Activated CD8-positive, alpha-beta T cell treated with anti-CD3 and anti-CD28 coated beads, Interleukin-2, amount 10 ng/mL, durations not matched to agents 7 days and 5 days (primary cell): ENCODE measurements at regions of chr14 and their contacts with region 1.

Region 1: DNA sequence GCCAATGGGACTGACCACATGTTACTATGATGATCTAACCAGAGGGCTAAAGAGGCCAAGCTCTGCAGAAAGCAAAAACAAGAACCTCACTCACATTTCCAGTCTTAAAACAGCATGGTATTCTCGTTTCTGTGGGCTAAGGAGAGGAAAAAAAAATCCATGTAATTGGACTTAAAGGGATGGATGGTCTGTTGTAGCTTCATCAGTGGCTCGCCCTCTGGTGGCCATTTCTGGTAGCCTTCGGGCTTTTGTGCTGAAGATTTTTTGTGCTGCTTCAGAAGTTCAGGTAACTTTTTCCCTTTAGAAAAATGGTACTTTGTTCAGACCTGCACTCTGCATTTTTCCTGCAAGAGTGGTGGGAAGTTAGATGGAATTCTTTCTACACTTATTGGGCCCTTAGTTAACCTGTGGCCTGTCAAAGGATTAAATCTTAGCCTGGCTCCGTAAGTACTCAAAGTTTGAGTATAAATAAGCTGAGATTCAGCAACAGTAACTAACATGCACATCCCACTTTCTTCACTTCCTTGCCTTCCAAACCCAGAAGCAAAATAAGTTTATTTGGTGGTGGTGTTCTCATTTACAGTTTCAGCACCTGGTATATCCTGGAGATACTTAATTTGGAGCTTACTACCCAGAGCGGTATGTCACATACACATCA is 22.3 kb downstream of the DCAF4 start:
- DNase-seq: peak; percentile 78
- ATAC-seq: peak; percentile 42
- H3K4me3 Mint-ChIP-seq: no peak overlapping the region
- H3K27ac Mint-ChIP-seq: peak overlapping the region; percentile 13
- H3K4me1 Mint-ChIP-seq: peaks cover 21% of the 10 kb centered on the region
- H3K27me3 Mint-ChIP-seq: no peaks in the 10 kb centered on the region

Region 2: GRCh38 chr14:72891666-72892102 is 56.9 kb before region 1 on chr14:
- CTCF ChIA-PET with region 1: no interaction called
- POLR2A ChIA-PET with region 1: no interaction called
- DNase-seq: no peak
- ATAC-seq: no peak
- H3K4me3 Mint-ChIP-seq: peak overlapping the region; percentile 90
- H3K27ac Mint-ChIP-seq: no peak overlapping the region
- H3K4me1 Mint-ChIP-seq: peaks cover 49% of the 10 kb centered on the region
- H3K27me3 Mint-ChIP-seq: peaks cover 58% of the 10 kb centered on the region

Region 3: GRCh38 chr14:72926292-72927028 is 22.1 kb before region 1 on chr14 and contains the start of gene DCAF4:
- CTCF ChIA-PET with region 1: interaction called, 10 read pairs
- POLR2A ChIA-PET with region 1: interaction called, 3 read pairs
- DNase-seq: peak; percentile 97
- ATAC-seq: peak; percentile 97
- H3K4me3 Mint-ChIP-seq: peak within 1 kb of the TSS; percentile 90
- H3K27ac Mint-ChIP-seq: peak within 1 kb of the TSS; percentile 96
- H3K4me1 Mint-ChIP-seq: peaks cover 18% of the 10 kb centered on the region
- H3K27me3 Mint-ChIP-seq: peaks cover 16% of the 10 kb centered on the region
- total RNA-seq, gene DCAF4: 17.5 to 18.1 TPM

Region 4: GRCh38 chr14:72962829-72963312 is 14.3 kb after region 1 on chr14:
- CTCF ChIA-PET with region 1: interaction called, 25 read pairs
- POLR2A ChIA-PET with region 1: no interaction called
- DNase-seq: no peak
- ATAC-seq: no peak
- H3K4me3 Mint-ChIP-seq: no peak overlapping the region
- H3K27ac Mint-ChIP-seq: no peak overlapping the region
- H3K4me1 Mint-ChIP-seq: peaks cover 28% of the 10 kb centered on the region
- H3K27me3 Mint-ChIP-seq: no peaks in the 10 kb centered on the region

Region 5: GRCh38 chr14:73026845-73027542 is 78.4 kb after region 1 on chr14 and contains the start of gene ZFYVE1:
- CTCF ChIA-PET with region 1: interaction called, 11 read pairs
- POLR2A ChIA-PET with region 1: no interaction called
- DNase-seq: peak; percentile 95
- ATAC-seq: peak; percentile 99
- H3K4me3 Mint-ChIP-seq: peak within 1 kb of the TSS; percentile 94
- H3K27ac Mint-ChIP-seq: peak within 1 kb of the TSS; percentile 91
- H3K4me1 Mint-ChIP-seq: peaks cover 34% of the 10 kb centered on the region
- H3K27me3 Mint-ChIP-seq: no peaks in the 10 kb centered on the region
- total RNA-seq, gene ZFYVE1: 10.5 to 12.7 TPM